GM12878 (cell line): ENCODE measurements at regions of chr11 and their contacts with region 1.

Region 1: GRCh38 chr11:72069787-72070251 is 10.5 kb downstream of the NUMA1 start:
- DNase-seq: no peak
- ATAC-seq: peak; percentile 92
- H3K4me3 ChIP-seq: peak overlapping the region; percentile 59; the same call in 1 of the 2 replicates
- H3K27ac ChIP-seq: peak overlapping the region; percentile 63
- H3K4me1 ChIP-seq: peaks cover 27% of the 10 kb centered on the region
- H3K27me3 ChIP-seq: no peaks in the 10 kb centered on the region
- CTCF ChIP-seq: no peak
- EP300 ChIP-seq: no peak
- POLR2A ChIP-seq: no peak
- RAD21 ChIP-seq: no peak

Region 2: DNA sequence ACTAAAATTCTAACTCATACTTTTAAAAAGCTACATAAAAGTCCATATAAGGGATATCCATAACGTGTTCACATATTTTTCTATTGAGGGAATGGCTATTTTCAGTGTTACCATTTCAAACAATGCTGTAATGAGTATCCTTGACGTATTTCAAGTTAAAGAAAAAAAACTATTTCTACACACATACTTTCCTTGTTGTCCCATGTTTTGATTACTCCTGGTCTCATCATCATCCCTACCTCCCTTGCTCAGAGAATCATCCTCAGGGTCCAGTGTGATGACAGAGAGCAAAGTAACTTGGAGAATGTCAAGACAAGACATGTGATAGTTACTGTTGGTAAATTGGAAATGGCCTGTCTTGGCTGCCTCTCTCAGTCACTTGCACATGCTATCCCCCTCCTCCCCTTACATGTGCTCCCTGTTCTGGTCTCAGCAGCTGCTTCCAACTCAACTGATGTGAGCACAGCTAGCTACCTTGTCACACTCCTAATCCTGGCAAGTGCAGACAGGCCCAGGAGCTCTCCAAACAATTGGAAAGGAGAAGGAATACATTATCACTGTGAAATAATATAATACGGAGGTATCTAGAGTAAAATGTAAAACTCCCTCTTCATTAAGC is 11.3 kb before region 1 on chr11:
- CTCF ChIA-PET with region 1: interaction called, 9 read pairs
- POLR2A ChIA-PET with region 1: interaction called, 16 read pairs
- RAD21 ChIA-PET with region 1: no interaction called
- SMC1A ChIA-PET with region 1: interaction called, 19 read pairs
- in situ Hi-C with region 1: no loop called
- intact Hi-C with region 1: no loop called
- DNase-seq: no peak
- ATAC-seq: no peak
- H3K4me3 ChIP-seq: no peak overlapping the region
- H3K27ac ChIP-seq: no peak overlapping the region
- H3K4me1 ChIP-seq: no peaks in the 10 kb centered on the region
- H3K27me3 ChIP-seq: no peaks in the 10 kb centered on the region
- CTCF ChIP-seq: no peak
- EP300 ChIP-seq: no peak
- POLR2A ChIP-seq: no peak
- RAD21 ChIP-seq: no peak

Region 3: DNA sequence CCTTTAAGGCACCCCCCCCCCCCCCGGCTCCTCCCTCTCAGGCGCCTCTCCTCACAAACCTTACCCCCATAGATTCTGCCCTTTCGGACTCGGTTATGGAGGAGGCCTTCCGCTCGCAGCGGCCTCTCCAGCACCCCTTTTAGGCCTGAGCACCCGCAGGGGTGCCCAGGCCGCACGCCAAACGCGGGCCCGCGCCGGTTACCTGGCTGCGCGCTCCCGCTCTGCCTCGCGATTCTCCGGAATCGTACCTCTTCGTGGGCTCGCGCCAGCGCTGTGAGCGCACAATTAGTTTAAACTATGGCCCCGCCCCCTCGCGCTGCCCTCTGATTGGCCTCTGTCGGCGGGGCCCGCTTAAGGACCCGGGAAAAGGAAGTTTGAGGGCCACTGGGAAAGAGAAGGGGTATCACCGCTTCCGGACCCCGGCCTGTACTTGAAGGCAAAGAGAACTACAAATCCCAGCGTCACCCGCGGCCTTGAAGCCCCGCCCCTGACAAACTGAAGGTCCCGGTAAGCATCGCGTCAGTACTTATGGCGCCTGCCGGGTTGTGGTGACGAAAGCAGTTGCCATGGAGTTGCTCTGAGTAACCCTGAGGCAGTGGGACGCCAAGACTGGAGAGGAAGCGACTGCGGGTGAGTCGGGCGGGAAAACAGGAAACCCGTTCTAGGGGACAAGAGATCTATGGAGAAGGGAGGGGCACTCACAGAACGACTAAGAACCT is 10.6 kb after region 1 on chr11 and contains the starts of genes LRRC51 and NUMA1:
- CTCF ChIA-PET with region 1: interaction called, 11 read pairs
- POLR2A ChIA-PET with region 1: interaction called, 9 read pairs
- RAD21 ChIA-PET with region 1: no interaction called
- SMC1A ChIA-PET with region 1: interaction called, 21 read pairs
- in situ Hi-C with region 1: no loop called
- intact Hi-C with region 1: no loop called
- DNase-seq: peak; percentile 99
- ATAC-seq: peak; percentile 97
- H3K4me3 ChIP-seq: peak within 1 kb of the TSS; percentile 77
- H3K27ac ChIP-seq: peak within 1 kb of the TSS; percentile 78
- H3K4me1 ChIP-seq: peaks cover 16% of the 10 kb centered on the region
- H3K27me3 ChIP-seq: no peaks in the 10 kb centered on the region
- CTCF ChIP-seq: no peak
- EP300 ChIP-seq: no peak
- POLR2A ChIP-seq: peak; percentile 83
- RAD21 ChIP-seq: no peak
- polyA plus RNA-seq, gene LRRC51: 4.7 to 6.2 TPM
- polyA plus RNA-seq, gene NUMA1: 5.5 to 7.1 TPM

Region 4: GRCh38 chr11:72132646-72133045 is 62.8 kb after region 1 on chr11:
- CTCF ChIA-PET with region 1: no interaction called
- POLR2A ChIA-PET with region 1: no interaction called
- RAD21 ChIA-PET with region 1: no interaction called
- SMC1A ChIA-PET with region 1: no interaction called
- in situ Hi-C with region 1: no loop called
- intact Hi-C with region 1: no loop called
- DNase-seq: no peak
- ATAC-seq: no peak
- H3K4me3 ChIP-seq: no peak overlapping the region
- H3K27ac ChIP-seq: no peak overlapping the region
- H3K4me1 ChIP-seq: no peaks in the 10 kb centered on the region
- H3K27me3 ChIP-seq: no peaks in the 10 kb centered on the region
- CTCF ChIP-seq: no peak
- EP300 ChIP-seq: no peak
- POLR2A ChIP-seq: no peak
- RAD21 ChIP-seq: no peak